ENCODE measurements at regions of chr17 and their contacts with region 1.

Region 1: GRCh38 chr17:75405365-75406221 is at the start of gene GRB2:
- DNase-seq: peak; percentile 99 to 100
- ATAC-seq: peak; percentile 97 to 99 (median 98)
- H3K4me3 ChIP-seq: peak within 1 kb of the TSS; percentile 82 to 100 (median 96)
- H3K27ac ChIP-seq: peak within 1 kb of the TSS; percentile 79 to 97 (median 94)
- H3K4me1 ChIP-seq: peaks cover 0 to 46% (median 36%) of the 10 kb centered on the region in 9 donors
- H3K27me3 ChIP-seq: no peaks in the 10 kb centered on the region
- CTCF ChIP-seq: peak in 1 of 9 donors; percentile 7
- total RNA-seq, gene GRB2: 43.9 to 85.5 (median 52.0) TPM

Region 2: GRCh38 chr17:75271233-75271954 is 134.2 kb before region 1 on chr17:
- intact Hi-C with region 1: loop called in 3 of 10 experiments (anchors 5 kb)
- DNase-seq: peak; percentile 78 to 83
- ATAC-seq: peak; percentile 60 to 90 (median 72)
- H3K4me3 ChIP-seq: peak overlapping the region; percentile 65 to 100 (median 96)
- H3K27ac ChIP-seq: peak overlapping the region; percentile 81 to 98 (median 91)
- H3K4me1 ChIP-seq: peaks cover 4 to 52% (median 37%) of the 10 kb centered on the region in 9 donors
- H3K27me3 ChIP-seq: no peaks in the 10 kb centered on the region
- CTCF ChIP-seq: peak; percentile 60 to 95 (median 81)

Region 3: DNA sequence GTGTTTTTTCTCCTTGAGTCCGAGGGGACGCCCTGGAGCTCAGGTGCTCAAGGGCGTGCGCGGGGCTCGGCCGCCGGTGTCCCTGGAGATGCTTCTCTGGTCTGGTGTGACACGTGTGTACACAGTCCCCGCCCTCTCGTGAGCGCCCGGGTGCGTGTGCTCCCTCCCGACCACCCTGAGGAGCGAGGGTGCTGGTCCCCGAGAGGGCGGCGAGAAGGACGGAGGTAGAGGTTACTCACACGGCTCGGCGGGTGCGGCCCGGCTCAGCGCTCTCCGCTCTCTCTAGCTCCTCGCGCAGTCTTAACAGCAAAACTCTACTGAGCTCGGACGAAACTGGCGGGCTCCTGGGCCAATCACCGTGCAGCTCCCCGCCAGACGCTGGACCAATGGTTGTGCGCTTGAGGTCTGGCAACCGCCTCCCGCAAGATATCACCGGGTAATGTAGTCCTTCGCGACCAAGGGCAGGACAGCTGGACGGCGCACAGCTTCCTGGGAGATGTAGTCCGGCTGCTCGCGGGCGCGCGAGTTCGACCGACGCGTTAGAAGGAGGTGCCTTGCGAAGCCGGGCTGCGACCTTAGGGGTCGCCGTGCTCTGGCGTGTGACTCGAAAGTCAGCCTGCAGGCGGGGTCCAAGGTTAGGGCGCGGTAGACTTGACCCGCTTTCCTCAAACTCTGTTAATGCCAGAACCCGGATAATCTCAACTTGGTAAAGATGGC is 116.3 kb before region 1 on chr17 and contains the start of gene SLC25A19:
- intact Hi-C with region 1: loop called in 1 of 10 experiments (anchors 1 kb)
- DNase-seq: peak; percentile 98 to 99
- ATAC-seq: peak; percentile 98 to 100 (median 99)
- H3K4me3 ChIP-seq: peak within 1 kb of the TSS; percentile 59 to 98 (median 90)
- H3K27ac ChIP-seq: peak within 1 kb of the TSS; percentile 46 to 97 (median 90)
- H3K4me1 ChIP-seq: peaks cover 0 to 42% (median 10%) of the 10 kb centered on the region in 9 donors
- H3K27me3 ChIP-seq: no peaks in the 10 kb centered on the region
- CTCF ChIP-seq: peak in 5 of 9 donors; percentile 16 to 35 (median 28)
- total RNA-seq, gene SLC25A19: 6.8 to 19.2 (median 11.3) TPM

Region 4: DNA sequence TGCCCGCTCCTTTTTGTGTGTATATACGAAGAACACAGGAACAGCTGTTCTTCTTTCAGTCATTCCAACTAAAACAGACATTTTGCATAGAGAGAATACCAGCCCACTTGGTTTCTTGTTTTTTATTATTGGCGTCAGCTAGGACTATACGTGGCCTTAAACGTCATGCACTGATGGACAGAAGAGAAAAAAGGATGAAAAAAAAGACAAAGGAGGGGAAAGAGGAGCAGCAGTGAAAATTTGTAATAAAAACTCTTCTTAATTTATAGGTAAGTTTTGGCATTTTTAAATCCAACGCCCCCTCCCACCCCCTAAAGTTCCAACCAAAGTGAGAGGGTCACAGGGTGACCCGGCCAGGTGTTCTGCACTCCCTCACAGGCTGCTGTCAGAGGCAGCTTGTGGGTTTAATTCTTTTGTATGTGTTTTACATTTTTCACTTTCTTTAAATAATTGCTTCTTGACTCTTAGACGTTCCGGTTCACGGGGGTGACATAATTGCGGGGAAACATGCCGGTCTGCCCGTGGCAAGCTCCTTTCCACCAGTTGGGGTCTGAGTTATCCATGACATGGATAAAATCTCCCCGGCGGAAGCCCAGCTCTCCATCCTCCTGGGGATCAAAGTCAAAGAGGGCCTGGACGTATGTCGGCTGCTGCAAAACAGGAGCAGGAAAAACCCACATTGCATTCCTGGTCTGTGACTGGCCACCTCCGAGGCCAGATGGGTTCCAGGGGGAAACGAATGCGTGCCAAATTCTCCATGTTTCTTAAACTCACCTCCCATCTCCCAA is 85.5 kb before region 1 on chr17:
- intact Hi-C with region 1: loop called (anchors 1 to 5 kb)
- DNase-seq: no peak
- ATAC-seq: no peak
- H3K4me3 ChIP-seq: no peak overlapping the region
- H3K27ac ChIP-seq: no peak overlapping the region
- H3K4me1 ChIP-seq: peaks cover 0 to 60% (median 6%) of the 10 kb centered on the region in 9 donors
- H3K27me3 ChIP-seq: no peaks in the 10 kb centered on the region
- CTCF ChIP-seq: no peak

Region 5: DNA sequence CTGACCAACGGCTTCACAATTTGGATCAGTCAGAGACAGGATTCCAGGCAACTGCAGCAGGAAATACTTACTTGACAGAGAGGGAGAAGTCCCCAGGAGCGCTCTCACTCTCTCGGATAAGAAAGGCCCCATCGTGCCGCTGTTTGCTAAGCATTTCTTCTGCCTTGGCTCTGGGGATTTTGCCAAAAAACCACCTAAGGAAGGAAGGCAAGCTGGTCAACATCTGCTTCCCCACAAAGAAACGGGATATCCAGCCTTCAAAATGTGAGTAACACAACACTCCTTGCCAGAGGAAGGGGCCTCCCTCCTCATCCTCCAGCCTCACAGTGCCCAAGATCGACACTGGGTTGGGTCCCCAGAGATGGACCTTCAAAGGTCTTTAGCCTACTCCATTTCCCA is 79.8 kb before region 1 on chr17:
- intact Hi-C with region 1: loop called (anchors 1 to 5 kb)
- DNase-seq: no peak
- ATAC-seq: peak in 7 of 8 donors; percentile 27 to 61 (median 49)
- H3K4me3 ChIP-seq: no peak overlapping the region
- H3K27ac ChIP-seq: peak overlapping the region in 9 of 10 donors; percentile 22 to 83 (median 57)
- H3K4me1 ChIP-seq: peaks cover 9 to 57% (median 26%) of the 10 kb centered on the region in 9 donors
- H3K27me3 ChIP-seq: no peaks in the 10 kb centered on the region
- CTCF ChIP-seq: peak in 1 of 9 donors; percentile 8

Region 6: GRCh38 chr17:75371339-75371738 is 34.3 kb before region 1 on chr17:
- intact Hi-C with region 1: no loop called
- DNase-seq: no peak
- ATAC-seq: peak in 2 of 8 donors; percentile 9 to 13
- H3K4me3 ChIP-seq: no peak overlapping the region
- H3K27ac ChIP-seq: no peak overlapping the region
- H3K4me1 ChIP-seq: peaks cover 0 to 80% (median 41%) of the 10 kb centered on the region in 9 donors
- H3K27me3 ChIP-seq: no peaks in the 10 kb centered on the region
- CTCF ChIP-seq: no peak